ENCODE measurements at regions of chr5 and their contacts with region 1.

Region 1: GRCh38 chr5:6583049-6583880 is 49.6 kb downstream of the NSUN2 start:
- DNase-seq: peak; percentile 63 to 80 (median 69)
- H3K4me3 ChIP-seq: peak overlapping the region; percentile 36
- H3K27ac ChIP-seq: peak overlapping the region in 1 of 2 donors; percentile 62
- H3K4me1 ChIP-seq: peaks cover 9% of the 10 kb centered on the region
- H3K27me3 ChIP-seq: no peaks in the 10 kb centered on the region
- CTCF ChIP-seq: peak; percentile 30 to 71 (median 52)
- EP300 ChIP-seq: no peak
- POLR2A ChIP-seq: no peak

Region 2: GRCh38 chr5:6383376-6383775 is 199.9 kb before region 1 on chr5:
- intact Hi-C with region 1: loop called in 1 of 4 experiments (anchors 10 kb)
- DNase-seq: no peak
- H3K4me3 ChIP-seq: no peak overlapping the region
- H3K27ac ChIP-seq: no peak overlapping the region
- H3K4me1 ChIP-seq: peaks cover 3% of the 10 kb centered on the region
- H3K27me3 ChIP-seq: no peaks in the 10 kb centered on the region
- CTCF ChIP-seq: no peak
- EP300 ChIP-seq: no peak
- POLR2A ChIP-seq: no peak